Uterus (tissue), 4 donors: ENCODE measurements at regions of chr15 and their contacts with region 1.

Region 1: GRCh38 chr15:23877502-23878412 is 190.7 kb upstream of the NDN start:
- DNase-seq: peak; percentile 28 to 42
- H3K4me3 ChIP-seq: no peak overlapping the region
- H3K27ac ChIP-seq: no peak overlapping the region
- H3K4me1 ChIP-seq: no peaks in the 10 kb centered on the region
- H3K27me3 ChIP-seq: peaks cover 0 to 1% of the 10 kb centered on the region in 2 donors
- CTCF ChIP-seq: peak; percentile 17 to 51 (median 34)
- POLR2A ChIP-seq: no peak

Region 2: DNA sequence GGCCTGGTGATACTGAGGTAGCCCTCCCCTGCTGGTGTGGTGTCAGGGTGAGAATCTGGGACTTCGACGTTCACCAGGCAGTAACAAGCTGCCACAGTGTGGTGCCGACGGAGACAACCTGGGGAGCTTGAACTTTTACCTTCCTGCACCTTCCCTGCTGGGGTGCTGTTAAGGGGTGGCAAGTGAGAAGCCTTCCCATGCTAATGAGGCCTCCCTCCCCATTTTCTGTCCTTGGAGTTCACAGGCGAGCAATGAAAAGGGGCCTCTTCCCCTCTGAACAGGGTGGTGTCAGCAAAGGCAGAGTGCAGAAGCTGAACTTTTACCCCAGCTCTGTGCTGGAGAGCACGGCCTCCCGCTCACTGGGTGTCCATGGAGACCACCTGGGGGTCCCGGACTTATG is 243.6 kb before region 1 on chr15:
- intact Hi-C with region 1: loop called (anchors 10 kb)
- DNase-seq: no peak
- H3K4me3 ChIP-seq: no peak overlapping the region
- H3K27ac ChIP-seq: no peak overlapping the region
- H3K4me1 ChIP-seq: no peaks in the 10 kb centered on the region
- H3K27me3 ChIP-seq: no peaks in the 10 kb centered on the region
- CTCF ChIP-seq: no peak
- POLR2A ChIP-seq: no peak